Right lobe of liver (tissue), 6 donors: ENCODE measurements at regions of chr1 and their contacts with region 1.

Region 1: DNA sequence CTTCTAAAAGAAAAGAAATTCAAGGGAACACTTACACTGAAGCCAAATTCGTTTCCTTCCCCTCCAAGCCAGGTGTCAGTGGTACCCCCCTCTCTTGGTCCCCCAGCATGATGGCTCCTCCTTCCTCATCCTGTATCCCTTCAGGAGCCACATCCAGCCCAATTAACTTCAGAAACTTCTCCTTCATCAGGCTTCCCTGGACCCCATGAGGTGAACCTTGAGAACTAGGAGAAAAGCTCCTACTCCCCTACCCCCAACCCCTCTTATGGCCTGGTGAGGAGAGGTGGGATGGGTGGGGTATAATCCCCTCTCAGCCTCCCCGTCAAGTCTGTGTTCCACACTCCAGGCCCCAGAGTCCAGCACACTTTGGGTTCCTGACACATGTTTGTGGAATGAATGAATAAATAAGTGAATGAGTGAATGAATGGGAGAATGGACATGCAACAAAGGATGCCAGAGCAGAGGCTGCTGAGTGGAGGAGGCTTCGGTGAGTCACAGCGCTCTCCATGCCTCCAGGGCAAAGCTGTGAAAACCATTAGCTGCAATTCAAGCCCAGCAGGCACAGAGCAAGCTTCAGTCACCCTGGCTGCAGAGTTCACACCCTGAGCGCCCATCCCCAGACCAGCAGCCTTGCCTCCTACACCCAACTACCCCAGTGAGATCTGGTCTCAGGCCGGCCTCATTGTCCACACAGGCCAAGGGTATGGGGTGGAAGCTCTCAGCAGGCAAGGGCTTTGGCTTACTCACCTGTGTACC is 43.8 kb downstream of the BATF3 start:
- DNase-seq: no peak
- ATAC-seq: no peak
- H3K4me3 ChIP-seq: no peak overlapping the region
- H3K27ac ChIP-seq: no peak overlapping the region
- H3K4me1 ChIP-seq: no peaks in the 10 kb centered on the region
- H3K27me3 ChIP-seq: no peaks in the 10 kb centered on the region
- CTCF ChIP-seq: no peak
- POLR2A ChIP-seq: no peak

Region 2: GRCh38 chr1:212782422-212783154 is 126.7 kb after region 1 on chr1:
- intact Hi-C with region 1: loop called in 1 of 2 experiments (anchors 10 kb)
- DNase-seq: no peak
- ATAC-seq: peak; percentile 62 to 90 (median 76)
- H3K4me3 ChIP-seq: no peak overlapping the region
- H3K27ac ChIP-seq: no peak overlapping the region
- H3K4me1 ChIP-seq: no peaks in the 10 kb centered on the region
- H3K27me3 ChIP-seq: no peaks in the 10 kb centered on the region
- CTCF ChIP-seq: peak; percentile 57 to 70 (median 62)
- POLR2A ChIP-seq: no peak

Region 3: GRCh38 chr1:212797681-212798080 is 141.8 kb after region 1 on chr1:
- intact Hi-C with region 1: no loop called
- DNase-seq: no peak
- ATAC-seq: no peak
- H3K4me3 ChIP-seq: no peak overlapping the region
- H3K27ac ChIP-seq: no peak overlapping the region
- H3K4me1 ChIP-seq: no peaks in the 10 kb centered on the region
- H3K27me3 ChIP-seq: no peaks in the 10 kb centered on the region
- CTCF ChIP-seq: no peak
- POLR2A ChIP-seq: no peak

Region 4: DNA sequence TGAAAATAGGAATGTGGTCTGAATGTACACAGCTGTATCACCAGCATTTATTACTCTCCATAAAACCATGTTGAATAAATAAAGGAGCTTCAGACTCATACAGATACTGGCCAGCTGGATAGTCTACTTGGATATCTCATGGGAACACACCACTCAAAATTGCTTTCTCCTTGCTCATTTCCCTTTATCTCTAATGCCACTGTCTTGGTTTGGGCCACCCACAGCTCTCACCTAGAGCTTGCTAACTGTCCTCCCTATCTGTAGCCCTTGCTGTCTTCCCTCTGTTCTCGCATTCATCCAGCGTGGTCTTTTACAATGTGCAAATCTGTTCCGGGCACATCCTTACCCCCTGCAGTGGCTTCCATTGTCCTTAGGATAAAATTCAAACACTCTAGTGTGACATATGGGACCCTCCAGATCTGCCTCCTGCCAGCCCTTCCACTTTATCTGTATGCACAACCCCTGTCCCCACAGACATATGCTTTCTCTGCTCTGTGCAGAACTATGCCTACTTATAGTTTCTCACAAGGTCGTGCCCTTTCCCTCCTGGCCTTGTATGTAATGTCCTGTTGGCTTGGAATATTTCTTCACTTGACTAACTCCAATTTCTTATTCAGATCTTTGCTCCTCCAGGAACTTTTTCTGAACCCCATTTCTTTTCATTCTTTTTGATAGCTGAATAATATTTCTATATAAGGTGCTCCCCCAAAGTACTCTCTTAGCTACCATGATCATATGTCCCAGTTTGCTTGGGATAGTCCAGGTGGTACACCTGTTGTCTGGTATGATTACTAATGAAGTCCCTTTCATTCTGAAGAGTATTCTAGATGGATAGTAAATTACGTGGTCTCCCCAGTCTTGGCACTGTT is 205.1 kb after region 1 on chr1:
- intact Hi-C with region 1: no loop called
- DNase-seq: no peak
- ATAC-seq: no peak
- H3K4me3 ChIP-seq: no peak overlapping the region
- H3K27ac ChIP-seq: no peak overlapping the region
- H3K4me1 ChIP-seq: peaks cover 0 to 7% (median 0%) of the 10 kb centered on the region in 4 donors
- H3K27me3 ChIP-seq: no peaks in the 10 kb centered on the region
- CTCF ChIP-seq: no peak
- POLR2A ChIP-seq: no peak